ENCODE measurements at regions of chr6 and their contacts with region 1.

Region 1: GRCh38 chr6:36177166-36177565 is 19.4 kb upstream of the BRPF3 start:
- DNase-seq: no peak
- ATAC-seq: no peak
- H3K4me3 ChIP-seq: no peak overlapping the region
- H3K4me3 Mint-ChIP-seq: no peak overlapping the region
- H3K27ac ChIP-seq: no peak overlapping the region
- H3K27ac Mint-ChIP-seq: no peak overlapping the region
- H3K4me1 ChIP-seq: no peaks in the 10 kb centered on the region
- H3K4me1 Mint-ChIP-seq: peaks cover 0 to 4% of the 10 kb centered on the region in 2 donors
- H3K27me3 ChIP-seq: no peaks in the 10 kb centered on the region
- H3K27me3 Mint-ChIP-seq: peaks cover 3 to 8% of the 10 kb centered on the region in 2 donors
- CTCF ChIP-seq: no peak

Region 2: DNA sequence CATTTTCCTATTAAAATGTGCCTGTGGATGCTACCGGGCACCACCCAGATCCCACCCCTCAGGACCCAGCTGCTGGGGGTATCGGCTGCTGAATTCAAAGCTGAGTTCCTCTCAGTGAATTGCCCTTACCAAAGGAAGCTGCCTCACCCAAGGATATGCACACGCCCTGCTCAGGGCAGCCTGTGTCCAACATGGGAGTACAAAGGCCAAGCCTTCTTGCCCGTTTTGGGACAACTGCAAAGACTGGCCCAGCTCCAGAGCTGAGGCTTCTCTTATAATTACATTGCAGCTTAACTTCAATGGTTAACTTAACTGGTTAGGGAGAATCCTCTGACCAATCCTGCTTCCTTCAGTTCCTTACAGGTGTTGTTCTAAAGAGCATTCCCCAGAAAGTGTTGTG is 744.9 kb before region 1 on chr6:
- intact Hi-C with region 1: loop called (anchors 5 kb)
- DNase-seq: no peak
- ATAC-seq: no peak
- H3K4me3 ChIP-seq: no peak overlapping the region
- H3K4me3 Mint-ChIP-seq: no peak overlapping the region
- H3K27ac ChIP-seq: no peak overlapping the region
- H3K27ac Mint-ChIP-seq: no peak overlapping the region
- H3K4me1 ChIP-seq: no peaks in the 10 kb centered on the region
- H3K4me1 Mint-ChIP-seq: no peaks in the 10 kb centered on the region
- H3K27me3 ChIP-seq: no peaks in the 10 kb centered on the region
- H3K27me3 Mint-ChIP-seq: no peaks in the 10 kb centered on the region
- CTCF ChIP-seq: no peak

Region 3: GRCh38 chr6:36094753-36095496 is 82.2 kb before region 1 on chr6:
- intact Hi-C with region 1: no loop called
- DNase-seq: peak; percentile 80 to 93
- ATAC-seq: peak; percentile 59 to 79 (median 61)
- H3K4me3 ChIP-seq: no peak overlapping the region
- H3K4me3 Mint-ChIP-seq: no peak overlapping the region
- H3K27ac ChIP-seq: no peak overlapping the region
- H3K27ac Mint-ChIP-seq: peak overlapping the region; percentile 80 to 96
- H3K4me1 ChIP-seq: peaks cover 20% of the 10 kb centered on the region
- H3K4me1 Mint-ChIP-seq: peaks cover 43 to 45% of the 10 kb centered on the region in 2 donors
- H3K27me3 ChIP-seq: no peaks in the 10 kb centered on the region
- H3K27me3 Mint-ChIP-seq: no peaks in the 10 kb centered on the region
- CTCF ChIP-seq: peak; percentile 94